ENCODE measurements at regions of chr10 and their contacts with region 1.

Region 1: GRCh38 chr10:77173615-77174461 is 463.8 kb downstream of the KCNMA1 start:
- DNase-seq: peak; percentile 66
- ATAC-seq: peak; percentile 90
- H3K4me3 ChIP-seq: no peak overlapping the region
- H3K27ac ChIP-seq: no peak overlapping the region
- H3K4me1 ChIP-seq: peaks cover 0 to 3% of the 10 kb centered on the region in 2 experiments; a peak in 2 of 4 replicates
- H3K27me3 ChIP-seq: peaks cover 21% of the 10 kb centered on the region; the same call in 1 of the 2 replicates
- CTCF ChIP-seq: peak; percentile 80 to 90 (median 84); a peak in 5 of 6 replicates
- POLR2A ChIP-seq: no peak
- RAD21 ChIP-seq: peak; percentile 90

Region 2: GRCh38 chr10:77339166-77339565 is 165.3 kb after region 1 on chr10:
- CTCF ChIA-PET with region 1: no interaction called
- POLR2A ChIA-PET with region 1: no interaction called
- RAD21 ChIA-PET with region 1: no interaction called
- intact Hi-C with region 1: no loop called
- DNase-seq: no peak
- ATAC-seq: no peak
- H3K4me3 ChIP-seq: no peak overlapping the region
- H3K27ac ChIP-seq: no peak overlapping the region
- H3K4me1 ChIP-seq: no peaks in the 10 kb centered on the region
- H3K27me3 ChIP-seq: peaks cover 39% of the 10 kb centered on the region
- CTCF ChIP-seq: no peak
- POLR2A ChIP-seq: no peak
- RAD21 ChIP-seq: no peak

Region 3: DNA sequence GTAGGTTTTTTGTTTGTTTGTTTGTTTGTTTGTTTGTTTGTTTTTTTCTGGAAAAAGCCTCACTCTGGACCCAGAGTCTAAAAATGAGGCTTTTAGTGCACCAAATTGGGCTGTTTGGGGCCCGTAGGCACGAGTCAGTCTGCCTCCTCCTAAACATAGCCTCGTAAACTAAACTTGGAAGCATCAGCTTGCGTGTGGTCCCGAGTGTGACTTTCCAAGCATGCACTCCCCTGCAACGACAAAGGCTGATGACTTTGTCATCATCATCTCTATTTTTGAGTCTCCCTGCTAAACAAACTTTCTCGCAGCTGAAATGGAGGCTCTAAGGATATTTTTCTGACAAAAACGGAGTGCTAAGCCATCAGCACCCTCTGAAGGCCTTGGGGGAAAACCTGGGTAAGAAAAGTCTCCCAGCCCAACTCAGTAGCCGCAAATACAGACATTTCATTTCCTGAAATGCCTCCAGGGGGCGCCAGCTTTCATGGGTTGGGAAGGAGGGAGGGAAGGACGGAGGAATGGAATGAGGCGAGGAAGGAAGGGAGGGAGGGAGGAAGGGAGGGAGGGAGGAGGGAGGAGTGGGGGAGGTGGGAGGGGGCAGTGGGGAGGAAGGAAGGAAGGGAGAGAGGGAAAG is 217.9 kb after region 1 on chr10:
- CTCF ChIA-PET with region 1: interaction called, 6 read pairs
- POLR2A ChIA-PET with region 1: no interaction called
- RAD21 ChIA-PET with region 1: no interaction called
- intact Hi-C with region 1: loop called (anchors 5 kb)
- DNase-seq: peak; percentile 74
- ATAC-seq: peak; percentile 88
- H3K4me3 ChIP-seq: no peak overlapping the region
- H3K27ac ChIP-seq: no peak overlapping the region
- H3K4me1 ChIP-seq: peaks cover 6 to 23% of the 10 kb centered on the region in 2 experiments
- H3K27me3 ChIP-seq: peaks cover 12% of the 10 kb centered on the region; the same call in 1 of the 2 replicates
- CTCF ChIP-seq: peak; percentile 70 to 84 (median 82); a peak in 5 of 6 replicates
- POLR2A ChIP-seq: no peak
- RAD21 ChIP-seq: peak; percentile 89

Region 4: GRCh38 chr10:77710759-77711682 is 537.2 kb after region 1 on chr10:
- CTCF ChIA-PET with region 1: interaction called, 37 read pairs
- POLR2A ChIA-PET with region 1: no interaction called
- RAD21 ChIA-PET with region 1: no interaction called
- intact Hi-C with region 1: loop called (anchors 1 kb)
- DNase-seq: peak; percentile 6
- ATAC-seq: peak; percentile 98
- H3K4me3 ChIP-seq: no peak overlapping the region
- H3K27ac ChIP-seq: no peak overlapping the region
- H3K4me1 ChIP-seq: peaks cover 0 to 7% of the 10 kb centered on the region in 2 experiments; a peak in 1 of 4 replicates
- H3K27me3 ChIP-seq: peaks cover 10% of the 10 kb centered on the region; the same call in 1 of the 2 replicates
- CTCF ChIP-seq: peak; percentile 67 to 97 (median 90)
- POLR2A ChIP-seq: no peak
- RAD21 ChIP-seq: peak; percentile 82

Region 5: DNA sequence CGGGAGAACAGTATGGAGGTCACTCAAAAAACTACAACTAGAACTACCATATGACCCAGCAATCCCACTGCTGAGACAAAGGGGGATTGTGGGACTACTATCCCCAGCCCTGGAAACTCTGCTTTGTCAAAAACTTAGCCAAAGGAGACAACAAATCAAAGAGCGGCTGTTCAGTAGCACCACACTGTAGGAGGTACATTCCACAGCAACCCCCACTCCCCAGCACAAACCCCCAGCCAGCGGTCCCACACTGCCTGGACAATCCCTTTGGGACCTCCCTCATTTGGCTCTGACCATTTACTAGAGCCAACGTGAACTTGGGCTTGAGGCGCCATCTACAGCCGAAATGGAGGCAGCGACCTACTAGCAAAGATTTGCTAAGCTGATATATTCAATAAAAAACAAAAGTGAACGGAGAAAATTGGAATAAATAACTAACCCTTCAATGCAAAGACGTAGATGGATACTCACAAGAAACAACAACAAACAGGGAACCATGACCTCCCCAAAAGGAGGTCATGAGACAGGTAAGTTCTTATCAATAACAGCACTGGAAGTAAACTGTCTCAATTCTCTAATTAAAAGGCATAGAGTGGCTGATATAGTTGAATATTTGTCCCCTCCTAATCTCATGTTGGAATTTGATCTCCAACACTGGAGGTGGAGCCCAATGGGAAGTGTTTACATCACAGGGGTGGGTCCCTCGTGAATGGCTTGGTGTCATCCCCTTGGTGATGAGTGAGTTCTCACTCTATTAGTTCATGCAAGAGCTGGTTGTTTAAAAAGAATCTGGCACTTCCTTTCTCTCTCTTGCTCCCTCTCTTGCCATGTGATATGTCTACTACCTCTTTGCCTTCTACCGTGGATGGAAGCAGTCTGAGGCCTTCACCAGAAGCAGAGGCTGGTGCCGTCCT is 582.7 kb after region 1 on chr10:
- CTCF ChIA-PET with region 1: interaction called, 4 read pairs
- POLR2A ChIA-PET with region 1: no interaction called
- RAD21 ChIA-PET with region 1: interaction called, 3 read pairs
- intact Hi-C with region 1: loop called (anchors 5 kb)
- DNase-seq: peak; percentile 47
- ATAC-seq: peak; percentile 99
- H3K4me3 ChIP-seq: no peak overlapping the region
- H3K27ac ChIP-seq: no peak overlapping the region
- H3K4me1 ChIP-seq: no peaks in the 10 kb centered on the region
- H3K27me3 ChIP-seq: no peaks in the 10 kb centered on the region
- CTCF ChIP-seq: peak; percentile 77 to 92 (median 81); a peak in 5 of 6 replicates
- POLR2A ChIP-seq: no peak
- RAD21 ChIP-seq: peak; percentile 81

Region 6: GRCh38 chr10:77846718-77847630 is 673.1 kb after region 1 on chr10:
- CTCF ChIA-PET with region 1: no interaction called
- POLR2A ChIA-PET with region 1: no interaction called
- RAD21 ChIA-PET with region 1: no interaction called
- intact Hi-C with region 1: loop called (anchors 10 kb)
- DNase-seq: peak; percentile 16
- ATAC-seq: peak; percentile 77
- H3K4me3 ChIP-seq: no peak overlapping the region
- H3K27ac ChIP-seq: peak overlapping the region; percentile 23
- H3K4me1 ChIP-seq: peaks cover 27 to 38% of the 10 kb centered on the region in 2 experiments
- H3K27me3 ChIP-seq: no peaks in the 10 kb centered on the region
- CTCF ChIP-seq: peak; percentile 80 to 91 (median 89)
- POLR2A ChIP-seq: no peak
- RAD21 ChIP-seq: peak; percentile 88

Measured in HCT116 (cell line).